Dorsolateral prefrontal cortex (tissue), 120 donors: ENCODE measurements at regions of chr6 and their contacts with region 1.

Region 1: DNA sequence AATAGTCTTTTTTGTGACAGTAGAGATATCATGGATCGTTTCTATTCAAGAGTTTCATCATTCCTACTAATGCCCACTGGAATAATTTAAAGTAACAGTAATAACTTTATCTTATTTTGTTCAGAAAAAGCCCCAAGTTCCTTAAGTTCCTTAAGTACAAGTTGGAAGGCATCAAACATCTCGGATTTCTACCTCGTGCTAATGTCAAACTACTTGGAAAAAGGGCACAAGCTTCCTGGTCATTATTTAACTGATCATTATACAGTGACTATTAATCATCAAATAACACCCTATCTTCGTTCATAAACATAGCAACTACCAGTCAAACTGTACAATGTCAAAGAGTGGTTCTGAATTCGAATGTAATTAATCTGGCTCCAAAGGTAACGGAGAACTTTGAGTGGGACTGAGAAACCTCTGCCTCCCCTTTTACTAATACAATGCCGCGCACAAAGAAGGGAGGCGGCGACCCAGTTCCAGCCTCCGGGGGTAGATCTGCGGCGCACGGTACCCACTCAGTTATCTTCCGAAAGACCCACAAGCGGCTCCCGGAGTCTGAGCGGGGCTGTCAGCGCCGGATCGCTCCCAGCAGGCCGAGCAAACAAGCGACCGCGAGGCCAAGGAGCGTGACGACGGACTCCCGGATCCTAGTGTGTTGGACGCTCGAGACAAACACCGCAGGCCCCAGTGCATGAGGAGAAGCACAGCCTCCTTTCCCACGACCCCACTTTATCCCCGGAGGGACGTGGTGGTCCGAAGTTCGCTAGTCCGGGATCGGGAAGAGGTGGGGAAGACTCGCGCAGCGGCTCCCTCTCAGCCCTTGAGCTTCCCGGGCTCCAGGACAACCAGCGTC is 716 bp downstream of the SHPRH start:
- DNase-seq: peak; percentile 24 to 67 (median 52)
- H3K4me3 ChIP-seq: peak overlapping the region; percentile 57 to 98 (median 86)
- H3K27ac ChIP-seq: peak overlapping the region in 58 of 59 donors; percentile 8 to 94 (median 87)
- H3K27me3 ChIP-seq: no peaks in the 10 kb centered on the region
- CTCF ChIP-seq: no peak

Region 2: GRCh38 chr6:145734486-145735355 is 228.7 kb before region 1 on chr6:
- intact Hi-C with region 1: loop called in 1 of 2 experiments (anchors 10 kb)
- DNase-seq: peak; percentile 69 to 89 (median 82)
- H3K4me3 ChIP-seq: peak overlapping the region; percentile 58 to 89 (median 81)
- H3K27ac ChIP-seq: peak overlapping the region; percentile 72 to 98 (median 94)
- H3K27me3 ChIP-seq: no peaks in the 10 kb centered on the region
- CTCF ChIP-seq: peak in 7 of 56 donors; percentile 9 to 22 (median 16)

Region 3: DNA sequence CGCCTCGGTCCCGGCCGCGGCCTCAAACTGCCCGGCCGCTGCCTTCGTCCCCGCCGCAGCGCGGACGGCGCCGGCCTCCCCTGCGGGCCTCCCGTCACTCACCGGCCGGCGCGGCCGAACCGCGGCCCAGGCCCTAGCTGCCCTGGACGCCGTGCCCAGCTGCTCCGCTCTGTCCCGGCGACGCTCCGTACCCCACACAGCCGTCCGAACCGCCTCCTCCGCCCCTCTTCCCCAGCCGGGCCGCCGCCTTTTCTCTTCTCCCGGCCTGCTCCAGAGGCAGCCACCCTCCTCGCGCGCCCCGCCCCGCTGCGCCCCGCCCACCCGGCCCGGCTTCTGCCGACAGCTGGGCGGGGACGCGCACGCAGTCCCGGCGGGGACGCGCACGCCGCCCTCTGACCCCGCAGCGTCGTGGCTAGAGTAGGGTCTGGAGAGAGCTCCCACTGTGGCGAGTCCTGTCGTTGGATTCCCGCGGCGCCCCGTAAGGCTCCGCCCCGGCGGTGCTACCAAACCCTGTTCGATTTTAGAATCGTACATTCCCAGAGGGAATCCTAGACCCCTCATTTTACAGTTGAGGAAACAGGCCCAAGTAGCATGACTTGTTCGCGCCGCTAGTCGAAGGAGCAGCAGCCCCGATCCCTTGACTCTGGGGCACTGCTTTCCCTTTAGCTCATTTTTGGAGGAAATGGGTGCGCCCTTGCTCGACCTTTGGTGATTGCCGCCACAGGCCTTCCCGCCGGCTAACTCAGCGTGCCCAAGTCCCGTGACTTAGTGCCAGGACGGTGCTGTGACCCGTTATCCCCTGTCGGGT is 148.7 kb before region 1 on chr6 and contains the start of gene FBXO30:
- intact Hi-C with region 1: loop called (anchors 2 to 10 kb)
- DNase-seq: peak; percentile 75 to 95 (median 87)
- H3K4me3 ChIP-seq: peak within 1 kb of the TSS; percentile 54 to 97 (median 84)
- H3K27ac ChIP-seq: peak within 1 kb of the TSS; percentile 51 to 97 (median 90)
- H3K27me3 ChIP-seq: no peaks in the 10 kb centered on the region
- CTCF ChIP-seq: peak in 39 of 56 donors; percentile 8 to 52 (median 30)
- total RNA-seq, gene FBXO30: 9.7 to 17.6 (median 13.0) TPM

Region 4: DNA sequence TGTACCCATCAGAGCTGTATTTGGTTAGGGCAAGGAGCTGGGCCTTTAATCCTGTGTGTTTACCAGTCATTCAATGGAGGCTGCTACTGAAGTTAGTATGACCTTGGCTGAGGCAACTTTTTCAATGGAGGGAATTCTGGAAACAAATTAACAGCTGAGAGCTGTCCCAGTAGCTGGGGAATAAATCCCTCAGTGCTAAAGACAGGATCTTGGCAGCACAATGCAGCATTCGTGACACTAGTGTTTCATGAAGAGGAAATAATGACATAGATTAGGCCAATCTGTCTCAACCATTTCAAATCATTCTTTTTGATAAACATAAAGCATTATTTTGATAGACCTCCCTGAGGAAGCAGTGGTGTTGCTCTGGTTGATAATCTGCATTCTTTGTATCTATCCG is 108.3 kb after region 1 on chr6:
- intact Hi-C with region 1: no loop called
- DNase-seq: no peak
- H3K4me3 ChIP-seq: no peak overlapping the region
- H3K27ac ChIP-seq: no peak overlapping the region
- H3K27me3 ChIP-seq: no peaks in the 10 kb centered on the region
- CTCF ChIP-seq: no peak

Region 5: DNA sequence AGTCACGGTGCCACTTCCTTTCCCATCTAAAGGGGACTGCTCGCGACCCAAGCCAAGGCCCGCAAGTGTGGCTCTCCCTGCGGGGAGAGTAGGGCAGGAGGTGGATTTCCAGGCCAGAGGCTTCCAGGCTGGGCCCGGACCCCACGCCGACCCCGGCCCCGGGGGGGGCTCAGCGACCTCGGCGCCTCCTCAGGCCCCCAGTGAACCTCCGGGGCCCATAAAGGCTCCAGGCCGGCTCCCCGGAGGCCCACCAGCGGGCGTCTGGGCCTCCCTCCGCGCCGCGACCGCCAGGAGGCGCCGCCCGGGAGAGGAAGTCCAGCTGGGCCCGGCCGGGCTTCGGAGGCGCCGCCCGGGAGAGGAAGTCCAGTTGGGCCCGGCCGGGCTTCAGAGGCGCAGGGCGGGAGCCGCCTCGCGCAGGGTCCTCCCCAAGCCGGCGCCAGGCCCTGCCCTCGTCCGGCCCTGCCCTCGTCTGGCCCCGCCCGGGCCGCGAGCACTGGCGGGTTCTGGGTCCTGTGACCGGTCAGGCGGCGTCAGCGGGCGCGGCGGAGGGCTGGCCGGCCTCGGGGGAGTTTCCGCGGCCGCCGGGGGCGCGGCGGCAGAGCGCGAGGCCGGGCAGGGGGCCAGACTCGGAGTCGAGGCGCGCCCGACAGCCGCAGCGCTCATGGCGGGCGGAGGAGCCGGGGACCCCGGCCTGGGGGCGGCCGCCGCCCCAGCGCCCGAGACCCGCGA is 579.9 kb after region 1 on chr6 and contains the start of gene RAB32:
- intact Hi-C with region 1: loop called in 1 of 2 experiments (anchors 10 kb)
- DNase-seq: peak; percentile 59 to 89 (median 78)
- H3K4me3 ChIP-seq: peak within 1 kb of the TSS; percentile 57 to 89 (median 77)
- H3K27ac ChIP-seq: peak within 1 kb of the TSS; percentile 34 to 95 (median 88)
- H3K27me3 ChIP-seq: no peaks in the 10 kb centered on the region
- CTCF ChIP-seq: peak in 55 of 56 donors; percentile 36 to 81 (median 62)
- total RNA-seq, gene RAB32: 1.3 to 9.0 (median 3.7) TPM